AG04449 (cell line): ENCODE measurements at regions of chr20 and their contacts with region 1.

Region 1: DNA sequence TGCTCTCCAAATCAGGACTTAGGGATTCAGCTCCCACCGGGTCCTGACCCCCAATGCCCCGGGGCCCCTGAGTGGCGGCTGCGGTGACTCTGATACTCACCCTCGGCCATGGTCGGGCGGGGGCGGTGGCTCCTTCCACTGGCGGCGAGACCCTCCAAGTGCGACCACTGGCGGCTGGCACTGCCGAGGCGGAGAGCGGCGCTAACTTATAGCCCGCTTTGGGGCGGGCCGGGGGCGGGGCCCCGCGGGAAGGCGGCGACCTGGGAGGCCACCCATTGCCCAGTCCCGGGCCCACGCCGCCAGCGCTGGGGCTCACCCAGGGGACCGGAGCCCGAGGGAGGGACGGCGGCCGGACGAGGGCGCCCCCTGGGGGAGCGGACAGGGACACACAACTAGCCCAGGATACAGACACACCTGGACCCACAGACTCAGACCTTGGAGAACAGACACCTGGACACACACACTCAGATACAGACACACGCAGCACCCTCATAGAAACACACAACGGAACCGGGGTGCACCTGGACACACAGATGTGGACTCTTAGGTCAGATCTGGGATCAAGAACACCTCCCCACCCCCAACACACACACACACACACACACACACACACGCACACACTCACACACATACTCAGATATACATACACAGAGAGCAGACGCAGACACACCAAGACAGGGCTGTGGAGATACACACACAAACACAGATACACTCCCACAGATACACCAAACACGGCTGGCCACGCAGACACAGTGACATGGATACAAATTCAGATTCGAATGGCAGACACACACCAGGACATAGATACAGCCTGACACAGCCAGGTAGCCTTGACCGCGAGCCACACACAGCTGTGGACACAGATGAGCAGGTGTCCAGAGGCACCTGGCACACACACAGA is at the start of gene TGM2:
- DNase-seq: no peak
- H3K4me3 ChIP-seq: peak within 1 kb of the TSS; percentile 49
- CTCF ChIP-seq: peak; percentile 84

Region 2: DNA sequence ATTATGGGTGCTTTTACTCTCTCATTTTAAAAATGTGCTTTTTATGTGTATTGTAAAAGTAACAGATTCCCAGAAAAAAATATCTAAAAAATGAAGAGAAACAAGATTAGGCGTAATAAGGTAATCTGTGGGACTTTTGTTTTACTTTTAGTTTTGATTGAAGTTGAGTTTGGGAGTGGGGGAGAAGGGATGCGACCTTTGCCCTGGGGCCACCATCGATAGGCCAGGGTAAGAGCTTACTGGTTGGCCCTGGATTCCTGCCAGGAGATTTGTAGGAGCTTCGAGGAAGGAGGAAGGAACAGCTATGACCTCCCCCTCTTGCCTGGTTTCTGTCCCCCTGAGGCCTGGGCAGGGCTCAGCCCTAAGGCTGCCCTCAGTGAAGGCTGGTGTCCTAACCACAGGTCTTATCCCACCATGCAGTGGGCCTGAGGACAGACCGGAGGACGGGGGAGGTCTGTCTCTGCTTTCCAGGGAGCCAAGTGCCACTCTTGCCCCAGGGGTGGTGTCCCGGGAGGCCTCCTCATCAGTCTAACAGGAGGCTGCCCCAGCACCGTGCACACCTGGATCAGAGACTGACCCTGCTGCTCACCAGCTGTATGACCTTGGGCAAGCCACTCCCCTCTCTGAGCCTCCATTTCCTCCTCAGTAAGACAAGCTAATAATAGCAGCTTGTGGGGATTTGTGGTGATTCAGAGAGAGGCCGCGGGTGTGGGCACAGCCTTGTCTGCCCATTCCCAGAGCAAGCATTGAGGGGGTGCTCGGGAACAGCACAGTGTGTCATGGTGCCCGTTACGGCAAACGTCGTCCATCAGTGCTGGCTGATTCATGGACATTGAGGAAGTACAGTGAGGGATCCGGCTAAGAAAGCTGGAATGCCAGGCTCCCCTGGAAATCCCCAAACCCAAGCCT is 21.4 kb before region 1 on chr20:
- CTCF ChIA-PET with region 1: interaction called, 15 read pairs
- POLR2A ChIA-PET with region 1: interaction called, 3 read pairs
- DNase-seq: peak; percentile 84
- H3K4me3 ChIP-seq: no peak overlapping the region
- CTCF ChIP-seq: no peak

Region 3: DNA sequence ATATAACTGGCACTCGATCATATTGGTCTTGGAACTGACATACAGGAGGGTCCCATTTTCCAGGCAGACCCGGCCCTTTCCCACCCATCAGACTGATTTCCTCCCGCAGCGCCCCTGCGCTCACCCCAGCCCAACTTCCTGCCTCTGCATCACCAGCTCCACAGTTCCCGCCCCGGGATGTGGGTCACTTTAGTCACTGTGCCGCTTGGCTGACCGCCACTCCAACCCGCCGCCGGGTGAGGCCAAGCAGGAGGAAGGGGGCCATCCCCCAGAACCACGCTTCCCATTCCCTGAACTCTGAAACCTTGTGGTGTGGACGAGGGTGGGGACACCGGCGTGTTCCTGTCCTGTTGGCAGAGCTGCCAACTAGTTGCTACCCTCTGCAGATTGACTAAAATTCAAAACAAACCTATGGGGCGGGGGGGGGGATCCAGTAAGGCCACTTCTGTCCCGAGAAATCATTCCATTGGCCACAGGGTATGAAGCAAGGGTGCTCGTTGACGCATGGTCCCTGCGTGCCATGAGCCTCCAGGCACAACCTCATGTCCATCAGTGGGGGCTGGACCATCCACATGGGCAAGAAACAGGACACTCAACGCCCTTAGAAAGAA is 12.6 kb before region 1 on chr20:
- CTCF ChIA-PET with region 1: interaction called, 22 read pairs
- POLR2A ChIA-PET with region 1: no interaction called
- DNase-seq: no peak
- H3K4me3 ChIP-seq: no peak overlapping the region
- CTCF ChIP-seq: no peak